ENCODE measurements at regions of chr3 and their contacts with region 1.

Region 1: GRCh38 chr3:39809181-39809994 is at the start of gene MYRIP:
- DNase-seq: peak; percentile 41 to 83 (median 65)
- H3K4me3 ChIP-seq: peak within 1 kb of the TSS; percentile 59 to 93 (median 78)
- H3K27ac ChIP-seq: peak within 1 kb of the TSS in 58 of 59 donors; percentile 33 to 94 (median 82)
- H3K27me3 ChIP-seq: peaks cover 0 to 3% (median 0%) of the 10 kb centered on the region in 45 donors
- CTCF ChIP-seq: peak in 20 of 56 donors; percentile 6 to 46 (median 22)
- total RNA-seq, gene MYRIP: 23.2 to 68.4 (median 47.6) TPM

Region 2: GRCh38 chr3:39541917-39542329 is 267.5 kb before region 1 on chr3:
- intact Hi-C with region 1: loop called in 1 of 2 experiments (anchors 5 kb)
- DNase-seq: no peak
- H3K4me3 ChIP-seq: peak overlapping the region in 57 of 59 donors; percentile 1 to 63 (median 41)
- H3K27ac ChIP-seq: peak overlapping the region in 22 of 59 donors; percentile 2 to 63 (median 26)
- H3K27me3 ChIP-seq: no peaks in the 10 kb centered on the region
- CTCF ChIP-seq: peak; percentile 55 to 85 (median 72)

Region 3: GRCh38 chr3:39937874-39938273 is 128.5 kb after region 1 on chr3:
- intact Hi-C with region 1: loop called in 1 of 2 experiments (anchors 5 kb)
- DNase-seq: no peak
- H3K4me3 ChIP-seq: peak overlapping the region in 2 of 59 donors; percentile 5 to 9
- H3K27ac ChIP-seq: peak overlapping the region in 57 of 59 donors; percentile 3 to 94 (median 72)
- H3K27me3 ChIP-seq: no peaks in the 10 kb centered on the region
- CTCF ChIP-seq: no peak